ENCODE measurements at regions of chr22 and their contacts with region 1.

Region 1: DNA sequence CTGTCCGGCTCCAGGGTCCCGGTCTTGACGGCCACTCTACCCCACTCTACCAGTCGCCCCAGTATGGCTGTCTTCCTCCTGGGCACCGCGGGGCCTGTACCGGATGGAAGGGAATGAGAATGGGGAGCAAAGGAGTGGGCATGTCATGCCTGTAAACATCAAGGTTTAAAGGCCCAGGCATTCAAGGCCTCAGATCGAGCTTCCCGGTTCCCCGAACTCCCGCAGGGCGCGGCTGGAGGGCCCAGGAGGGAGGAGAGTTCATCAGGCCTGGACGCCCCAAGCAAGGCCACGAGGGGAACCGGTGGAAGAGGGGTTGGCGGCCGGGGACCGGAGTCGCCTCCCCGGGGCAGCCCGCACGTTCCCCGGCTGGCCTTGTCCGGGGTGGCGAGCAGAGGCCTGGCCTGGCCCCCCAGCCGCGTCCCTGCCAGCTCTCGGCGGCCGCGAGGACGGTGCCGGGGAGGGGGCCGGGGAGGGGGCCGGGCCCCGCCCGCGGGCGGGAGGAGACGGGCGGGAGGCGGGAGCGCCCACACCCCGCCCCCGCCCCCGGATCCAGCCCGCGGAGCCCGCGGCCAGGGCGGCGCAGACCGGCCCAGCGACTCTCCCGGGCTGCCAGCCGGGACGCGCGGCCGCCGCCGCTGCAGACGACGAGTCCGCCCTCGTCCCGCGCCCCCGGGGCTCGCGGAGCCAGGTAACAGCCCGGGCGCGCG is at the start of gene CDC42EP1:
- DNase-seq: no peak
- ATAC-seq: peak; percentile 68
- total RNA-seq, gene CDC42EP1: 17.7 TPM

Region 2: GRCh38 chr22:37544955-37545699 is 14.9 kb before region 1 on chr22:
- intact Hi-C with region 1: loop called (anchors 1 kb)
- DNase-seq: no peak
- ATAC-seq: peak; percentile 40

Measured in Right ventricle myocardium inferior (tissue), 1 donor.